Caki2 (cell line): ENCODE measurements at regions of chr4 and their contacts with region 1.

Region 1: GRCh38 chr4:10530137-10530786 is 73.0 kb upstream of the ZNF518B start:
- DNase-seq: no peak

Region 2: DNA sequence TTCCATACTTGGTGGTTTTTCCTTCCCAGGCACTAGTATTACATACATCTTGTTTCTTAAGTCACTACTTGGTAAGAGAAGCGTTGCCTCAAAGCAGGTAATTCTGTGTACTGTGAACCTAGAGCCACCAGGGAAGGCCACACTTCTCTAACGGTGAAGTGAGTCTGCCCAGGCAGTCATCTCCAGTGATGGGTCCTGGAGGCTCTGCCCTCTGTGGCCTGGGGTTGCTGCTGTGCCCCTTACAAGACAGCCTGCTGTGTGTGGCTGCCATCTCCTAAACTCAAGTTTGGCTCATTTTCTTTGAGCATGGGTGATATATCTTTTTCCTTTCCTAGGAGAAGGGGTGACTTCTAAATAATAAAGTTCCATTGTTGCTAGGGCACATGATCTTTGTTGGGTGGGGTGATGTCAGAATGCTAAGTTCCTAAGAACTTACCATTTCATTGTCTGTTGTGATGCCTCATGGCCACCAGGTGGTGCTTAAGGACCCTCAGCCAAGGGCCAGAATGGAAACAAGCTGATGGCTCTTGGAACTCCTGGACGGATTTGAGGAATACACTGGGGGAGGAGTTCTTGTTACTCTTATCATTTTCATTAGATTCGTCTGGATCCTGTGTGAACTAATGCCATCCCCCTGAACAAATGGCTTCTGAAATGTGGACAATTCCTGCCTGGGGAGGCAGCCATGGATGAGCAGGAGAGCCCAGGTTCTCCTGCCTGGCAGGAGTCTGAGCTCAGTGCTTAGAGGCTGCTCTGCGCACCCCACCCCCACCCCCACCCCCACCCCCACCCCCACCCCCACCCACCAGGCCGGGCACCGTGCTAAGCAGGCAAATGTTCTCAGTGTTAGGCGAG is 372.6 kb before region 1 on chr4:
- in situ Hi-C with region 1: loop called (anchors 25 kb)
- DNase-seq: peak; percentile 23

Region 3: DNA sequence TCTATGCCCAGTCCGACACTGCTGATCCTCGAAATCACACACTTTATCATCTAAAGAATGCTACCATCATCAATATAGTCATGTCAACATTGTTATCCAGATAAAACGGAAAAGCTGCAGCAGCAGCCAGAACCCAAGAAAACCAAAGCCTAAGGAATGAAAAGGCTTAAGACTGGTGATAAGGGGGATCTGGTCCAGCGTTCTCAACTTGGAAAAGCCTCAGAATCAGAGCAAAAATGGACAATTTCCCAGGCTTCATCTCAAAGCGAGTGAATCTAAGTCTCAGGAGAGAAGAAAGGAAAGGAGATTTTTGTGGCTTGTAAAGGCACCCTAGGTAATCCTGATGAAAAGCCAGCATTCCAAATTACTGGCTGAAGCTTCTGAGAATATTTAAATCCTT is 81.3 kb before region 1 on chr4:
- in situ Hi-C with region 1: no loop called
- DNase-seq: no peak